Activated T-helper 1 cell treated with anti-CD3 and anti-CD28 coated beads, Interleukin-12 subunit alpha, Interleukin-12 subunit beta, Interleukin-2, Interleukin-4 antibody, amounts not matched to agents 30 ng/mL and 10 ng/mL and 1 ng/mL, durations not matched to agents 14 hours and 24 hours and 36 hours (primary cell): ENCODE measurements at regions of chrX and their contacts with region 1.

Region 1: DNA sequence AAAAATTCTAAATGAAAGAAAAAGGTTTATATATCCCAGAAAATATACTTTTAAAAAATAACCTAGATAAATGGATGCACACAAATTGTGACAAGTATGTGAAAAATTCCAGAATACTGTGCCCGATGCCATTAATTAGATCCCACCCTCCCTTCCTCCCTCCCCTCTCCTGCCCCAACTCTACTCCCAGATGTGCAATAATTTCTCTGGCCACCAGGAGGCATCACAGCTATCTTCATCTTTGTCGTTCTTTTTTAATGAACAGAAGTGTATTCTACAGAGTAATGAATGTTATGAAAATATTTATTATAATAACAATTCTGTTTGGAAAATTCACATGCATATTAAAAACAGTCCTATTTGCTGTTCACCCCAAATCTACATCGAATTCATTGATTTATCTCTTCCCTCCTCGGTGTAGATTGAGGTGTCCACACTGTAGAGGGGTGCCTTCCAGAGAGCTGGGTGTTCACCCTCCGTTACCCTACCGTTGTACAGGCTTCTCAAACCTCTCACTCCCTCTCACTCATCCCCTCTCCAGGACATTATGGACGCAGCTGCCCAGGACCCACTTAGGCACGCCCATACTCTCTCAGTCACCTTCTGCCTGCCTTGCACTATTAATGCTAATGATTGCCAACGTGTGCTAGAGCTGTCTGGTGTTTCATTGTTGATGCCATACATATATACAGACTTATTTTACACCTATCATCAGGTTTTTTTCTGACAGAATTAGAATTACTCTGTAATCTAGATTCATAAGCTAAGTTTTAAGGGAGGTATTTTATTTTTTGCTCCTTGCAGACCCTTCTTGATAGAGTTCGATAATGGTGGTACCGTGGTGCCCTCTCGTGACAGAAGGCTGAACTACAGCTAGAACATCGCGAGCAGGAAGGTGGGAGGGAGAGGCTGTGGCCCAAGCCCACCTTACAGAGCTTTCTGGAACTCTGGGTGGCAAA is 14.1 kb downstream of the RAB40AL start:
- DNase-seq: peak; percentile 15
- H3K4me3 Mint-ChIP-seq: no peak overlapping the region
- H3K27ac Mint-ChIP-seq: no peak overlapping the region
- H3K4me1 Mint-ChIP-seq: peaks cover 5% of the 10 kb centered on the region
- H3K27me3 Mint-ChIP-seq: peaks cover 4% of the 10 kb centered on the region

Region 2: DNA sequence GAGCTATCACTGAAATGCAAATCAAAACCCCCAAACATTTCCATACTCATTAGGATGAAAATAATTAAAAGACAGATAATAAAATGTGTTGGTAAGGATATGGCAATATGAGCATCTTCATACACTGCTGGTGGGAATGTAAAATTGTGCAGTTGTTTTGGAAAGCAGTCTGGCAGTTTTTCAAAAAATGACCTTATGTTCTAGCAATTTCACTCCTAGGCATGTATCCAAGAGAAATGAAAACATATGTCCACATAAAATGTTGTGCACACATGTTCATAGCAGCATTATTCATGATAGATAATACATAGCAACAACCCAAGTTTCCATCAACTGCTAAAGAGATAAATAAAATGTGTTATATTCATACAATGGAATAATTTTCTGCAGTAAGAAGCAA is 253.7 kb before region 1 on chrX:
- intact Hi-C with region 1: no loop called
- DNase-seq: no peak
- H3K4me3 Mint-ChIP-seq: no peak overlapping the region
- H3K27ac Mint-ChIP-seq: no peak overlapping the region
- H3K4me1 Mint-ChIP-seq: no peaks in the 10 kb centered on the region
- H3K27me3 Mint-ChIP-seq: no peaks in the 10 kb centered on the region

Region 3: GRCh38 chrX:102934624-102935023 is 16.6 kb before region 1 on chrX:
- intact Hi-C with region 1: loop called (anchors 2 kb)
- DNase-seq: no peak
- H3K4me3 Mint-ChIP-seq: no peak overlapping the region
- H3K27ac Mint-ChIP-seq: no peak overlapping the region
- H3K4me1 Mint-ChIP-seq: no peaks in the 10 kb centered on the region
- H3K27me3 Mint-ChIP-seq: no peaks in the 10 kb centered on the region